ENCODE measurements at regions of chr5 and their contacts with region 1.

Region 1: DNA sequence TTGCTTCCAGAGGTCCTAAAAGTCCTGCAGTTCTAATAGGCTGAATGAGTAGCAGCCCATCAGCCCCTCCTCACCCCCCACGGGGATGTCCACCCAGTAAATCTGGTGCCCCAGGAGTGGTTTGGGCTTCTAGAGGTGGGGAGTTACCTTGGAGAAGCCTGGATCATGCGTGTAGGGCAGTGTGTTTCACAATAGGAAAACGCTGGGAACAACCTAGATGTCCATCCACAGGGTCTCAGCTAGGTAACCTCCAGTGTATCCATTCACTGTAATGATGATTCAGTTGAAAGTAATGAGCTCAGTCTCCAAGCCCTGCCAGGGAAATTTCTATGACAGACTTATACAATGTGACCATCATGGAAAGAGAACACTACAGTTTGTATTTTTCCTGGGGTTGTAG is 51.8 kb downstream of the NDST1 start:
- DNase-seq: no peak
- ATAC-seq: no peak
- H3K4me3 ChIP-seq: no peak overlapping the region
- H3K27ac ChIP-seq: no peak overlapping the region
- H3K4me1 ChIP-seq: no peaks in the 10 kb centered on the region
- H3K27me3 ChIP-seq: no peaks in the 10 kb centered on the region
- CTCF ChIP-seq: no peak
- POLR2A ChIP-seq: no peak

Region 2: DNA sequence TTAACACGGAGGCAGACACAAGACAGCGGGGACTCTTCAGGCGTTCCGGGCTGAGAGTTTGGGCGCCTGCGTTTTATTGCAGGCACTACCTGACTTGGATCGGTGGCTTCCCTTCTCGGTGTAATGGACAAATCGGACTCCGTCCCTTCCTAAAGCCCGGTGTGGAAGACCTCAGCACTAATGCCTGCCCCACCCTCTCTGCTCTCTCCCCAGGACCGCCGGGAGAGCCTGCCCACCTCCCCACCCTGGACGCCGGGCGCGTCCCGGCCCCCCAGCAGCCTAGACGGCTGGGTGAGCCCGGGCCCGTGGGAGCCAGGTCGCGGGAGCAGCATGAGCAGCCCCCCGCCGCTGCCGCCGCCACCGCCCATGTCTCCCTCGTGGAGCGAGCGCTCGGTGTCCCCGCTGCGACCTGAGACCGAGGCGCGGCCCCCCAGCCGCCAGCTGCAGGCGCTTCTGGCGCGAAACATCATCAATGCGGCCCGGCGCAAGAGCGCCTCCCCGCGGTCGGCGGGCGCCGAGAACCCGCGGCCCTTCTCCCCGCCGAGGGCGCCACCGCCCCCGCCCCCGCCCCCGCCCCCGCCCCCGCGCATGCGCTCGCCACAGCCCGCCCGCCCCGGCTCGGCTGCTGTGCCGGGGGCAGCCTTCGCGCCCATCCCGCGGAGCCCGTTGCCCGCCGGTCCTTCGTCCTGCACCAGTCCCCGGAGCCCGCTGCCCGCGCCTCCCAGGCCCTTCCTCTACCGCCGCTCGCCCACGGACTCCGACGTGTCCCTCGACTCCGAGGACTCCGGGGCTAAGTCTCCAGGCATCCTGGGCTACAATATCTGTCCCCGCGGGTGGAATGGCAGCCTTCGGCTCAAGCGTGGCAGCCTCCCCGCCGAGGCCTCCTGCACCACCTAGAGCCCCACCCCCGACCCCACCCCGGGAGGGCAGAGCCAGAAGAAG is 96.8 kb after region 1 on chr5:
- intact Hi-C with region 1: loop called (anchors 5 kb)
- DNase-seq: peak; percentile 69 to 83 (median 78)
- ATAC-seq: peak; percentile 82
- H3K4me3 ChIP-seq: peak overlapping the region in 1 of 2 donors; percentile 7
- H3K27ac ChIP-seq: peak overlapping the region in 1 of 4 donors; percentile 41
- H3K4me1 ChIP-seq: peaks cover 12% of the 10 kb centered on the region
- H3K27me3 ChIP-seq: no peaks in the 10 kb centered on the region
- CTCF ChIP-seq: peak; percentile 56 to 91 (median 79)
- POLR2A ChIP-seq: no peak

Region 3: DNA sequence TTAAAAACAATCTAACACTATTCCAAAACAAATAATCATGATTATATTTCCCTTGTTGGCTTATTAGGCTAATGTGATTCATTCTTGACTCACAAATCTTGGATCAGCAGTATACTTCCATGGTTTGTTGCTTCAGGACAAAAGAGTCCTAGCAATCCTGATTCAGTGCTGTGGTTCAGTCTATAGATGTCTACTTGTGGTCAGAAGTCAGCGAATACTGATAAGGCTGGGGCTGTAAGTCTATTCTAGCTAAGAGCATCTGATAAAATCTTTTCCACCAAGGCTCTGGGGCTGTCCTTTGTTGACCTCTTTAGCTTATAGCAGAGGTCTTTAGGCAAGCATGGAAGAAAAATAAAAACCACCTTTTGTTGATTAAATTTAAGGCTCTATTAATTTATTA is 214.5 kb after region 1 on chr5:
- intact Hi-C with region 1: no loop called
- DNase-seq: no peak
- ATAC-seq: no peak
- H3K4me3 ChIP-seq: no peak overlapping the region
- H3K27ac ChIP-seq: no peak overlapping the region
- H3K4me1 ChIP-seq: peaks cover 9% of the 10 kb centered on the region
- H3K27me3 ChIP-seq: no peaks in the 10 kb centered on the region
- CTCF ChIP-seq: no peak
- POLR2A ChIP-seq: no peak

Region 4: DNA sequence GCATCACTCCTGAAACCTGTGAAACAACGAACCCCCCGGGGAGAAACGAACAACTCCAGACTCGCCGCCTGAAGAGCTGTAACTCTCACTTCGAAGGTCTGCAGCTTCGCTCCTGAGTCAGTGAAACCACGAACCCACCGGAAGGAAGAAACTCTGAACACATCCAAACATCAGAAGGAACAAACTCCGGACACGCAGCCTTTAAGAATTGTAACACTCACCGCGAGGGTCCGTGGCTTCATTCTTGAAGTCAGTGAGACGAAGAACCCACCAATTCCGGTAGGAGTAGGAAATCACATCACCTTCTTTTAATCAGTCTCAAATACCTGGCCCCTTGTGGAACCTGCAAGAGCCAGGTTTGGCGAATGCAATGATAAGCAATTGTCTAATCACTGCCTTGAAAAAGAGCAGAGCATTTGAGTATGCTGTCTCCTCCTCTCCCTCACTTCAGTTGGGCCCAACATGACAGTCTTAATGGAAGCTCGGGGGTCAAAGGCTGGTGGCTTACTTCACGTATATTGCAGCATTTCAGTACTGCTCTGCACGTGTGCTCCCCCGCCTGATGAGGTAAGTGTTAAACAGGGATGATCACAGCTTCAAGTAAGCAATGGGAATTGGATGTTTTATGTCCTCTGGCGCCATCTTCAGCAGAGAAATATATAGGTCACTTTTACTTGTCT is 287.1 kb after region 1 on chr5:
- intact Hi-C with region 1: loop called (anchors 5 kb)
- DNase-seq: peak; percentile 43 to 76 (median 61)
- ATAC-seq: peak; percentile 92
- H3K4me3 ChIP-seq: no peak overlapping the region
- H3K27ac ChIP-seq: no peak overlapping the region
- H3K4me1 ChIP-seq: peaks cover 3% of the 10 kb centered on the region
- H3K27me3 ChIP-seq: no peaks in the 10 kb centered on the region
- CTCF ChIP-seq: peak; percentile 46 to 93 (median 79)
- POLR2A ChIP-seq: no peak

Measured in body of pancreas (tissue), 4 donors.